Kidney (tissue), 22 donors: ENCODE measurements at regions of chr11 and their contacts with region 1.

Region 1: DNA sequence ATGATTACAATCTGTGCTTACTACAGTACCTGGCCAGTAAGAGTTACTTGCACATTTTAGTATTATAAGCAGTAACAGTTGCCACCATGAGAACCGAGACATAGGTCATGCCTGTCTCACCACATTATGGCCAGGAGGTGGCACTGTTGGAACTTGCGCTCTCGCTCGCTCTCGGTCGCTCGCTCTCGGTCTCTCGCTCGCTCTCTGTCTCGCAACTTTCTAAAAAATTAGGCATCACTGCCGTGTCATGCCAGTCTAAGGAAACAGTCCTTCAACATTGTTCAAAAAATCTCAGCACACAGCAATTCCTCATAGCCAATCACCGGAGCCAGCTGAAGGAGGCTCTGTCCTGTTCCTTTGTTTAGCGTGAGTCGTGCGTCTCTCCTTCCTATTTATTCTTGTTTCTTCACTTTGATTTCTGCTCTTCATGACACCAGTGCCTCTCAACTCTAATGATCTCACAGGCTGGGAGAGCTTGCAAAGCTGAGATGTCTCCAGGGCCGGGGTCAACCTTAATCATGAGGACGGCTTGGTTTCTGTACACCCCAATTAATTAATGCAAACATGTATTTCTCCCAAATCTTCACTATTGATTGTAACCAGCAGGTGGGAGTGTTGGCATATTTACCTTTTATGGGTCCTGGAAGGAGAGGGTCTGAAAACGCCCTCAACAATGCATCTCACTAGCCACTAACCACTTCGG is 6.3 kb upstream of the ADAMTS8 start:
- DNase-seq: peak in 4 of 5 donors; percentile 84 to 96 (median 90)
- H3K4me3 ChIP-seq: peak overlapping the region; percentile 88 to 94 (median 93)
- H3K27ac ChIP-seq: peak overlapping the region in 1 of 2 donors; percentile 71
- H3K4me1 ChIP-seq: peaks cover 0 to 8% (median 0%) of the 10 kb centered on the region in 3 donors
- H3K27me3 ChIP-seq: peaks cover 3% of the 10 kb centered on the region
- CTCF ChIP-seq: peak; percentile 91

Region 2: DNA sequence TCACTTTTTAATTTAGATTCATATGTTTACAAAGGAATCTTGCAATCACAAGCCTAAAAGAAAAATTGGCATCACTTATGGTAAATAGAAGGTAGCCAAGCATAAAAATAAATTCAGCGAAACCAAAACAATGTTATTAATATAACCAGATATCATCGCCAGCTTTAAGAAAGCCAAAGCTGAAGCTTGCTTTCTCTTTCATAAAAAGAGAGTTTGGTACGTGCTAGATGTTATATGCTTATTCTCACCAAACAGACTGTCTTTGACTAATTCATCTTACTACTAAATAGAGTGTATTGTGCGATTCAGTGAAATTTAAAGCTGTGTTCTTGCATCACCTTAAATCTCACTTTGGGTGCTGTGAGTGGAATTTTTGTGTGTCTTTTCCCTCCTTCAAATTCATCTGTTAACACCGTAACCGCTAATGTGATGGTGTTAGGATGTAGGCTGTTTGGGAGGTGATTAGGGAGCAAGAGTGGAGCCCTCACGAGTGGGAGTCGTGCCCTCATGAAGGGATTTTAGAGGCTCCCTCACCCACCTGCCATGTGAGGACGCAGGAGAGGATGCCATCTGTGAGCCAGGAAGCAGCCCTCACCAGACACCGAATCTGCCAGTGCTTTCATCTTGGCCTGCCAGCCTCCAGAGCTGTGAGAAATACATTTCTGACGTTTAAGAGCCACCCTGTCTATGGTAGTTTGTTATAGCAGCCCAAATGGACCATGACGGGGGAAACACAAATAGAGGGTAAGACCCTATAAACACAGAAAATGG is 753.1 kb before region 1 on chr11:
- intact Hi-C with region 1: no loop called
- DNase-seq: no peak
- H3K4me3 ChIP-seq: no peak overlapping the region
- H3K27ac ChIP-seq: no peak overlapping the region
- H3K4me1 ChIP-seq: no peaks in the 10 kb centered on the region
- H3K27me3 ChIP-seq: no peaks in the 10 kb centered on the region
- CTCF ChIP-seq: no peak

Region 3: GRCh38 chr11:130689222-130689908 is 254.7 kb after region 1 on chr11:
- intact Hi-C with region 1: no loop called
- DNase-seq: peak in 1 of 5 donors; percentile 70
- H3K4me3 ChIP-seq: no peak overlapping the region
- H3K27ac ChIP-seq: no peak overlapping the region
- H3K4me1 ChIP-seq: no peaks in the 10 kb centered on the region
- H3K27me3 ChIP-seq: no peaks in the 10 kb centered on the region
- CTCF ChIP-seq: no peak

Region 4: DNA sequence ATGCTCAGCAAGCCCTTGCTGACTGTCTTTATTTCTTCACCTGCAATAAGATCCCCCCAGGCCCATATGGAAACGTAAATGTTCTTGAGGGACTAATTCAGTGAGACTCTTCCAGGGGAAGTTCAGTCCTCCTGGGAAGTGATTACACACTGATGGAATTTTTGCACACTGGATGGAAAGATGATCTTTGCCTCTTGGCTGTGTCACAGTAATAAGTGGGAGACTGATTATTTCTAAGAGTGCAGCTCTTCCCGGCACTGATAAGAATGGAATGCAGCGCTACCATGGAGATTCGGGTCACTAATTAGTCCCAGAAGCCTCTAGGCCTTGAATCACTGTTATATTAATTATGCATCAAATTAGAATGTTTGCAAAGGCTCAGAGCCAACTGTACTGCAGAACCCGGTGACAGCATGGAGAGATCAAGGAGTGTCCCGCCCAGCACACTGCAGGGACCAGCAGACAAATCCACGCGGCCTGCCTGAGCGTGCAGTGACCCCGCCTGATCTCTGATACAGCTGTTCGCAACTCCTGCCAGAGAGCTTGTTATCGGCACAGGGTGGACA is 303.3 kb after region 1 on chr11:
- intact Hi-C with region 1: no loop called
- DNase-seq: peak in 4 of 5 donors; percentile 76 to 93 (median 88)
- H3K4me3 ChIP-seq: no peak overlapping the region
- H3K27ac ChIP-seq: peak overlapping the region in 1 of 2 donors; percentile 2
- H3K4me1 ChIP-seq: peaks cover 0 to 7% (median 4%) of the 10 kb centered on the region in 3 donors
- H3K27me3 ChIP-seq: no peaks in the 10 kb centered on the region
- CTCF ChIP-seq: no peak

Region 5: GRCh38 chr11:130831506-130831905 is 396.8 kb after region 1 on chr11:
- intact Hi-C with region 1: loop called (anchors 10 kb)
- DNase-seq: peak in 4 of 5 donors; percentile 67 to 83 (median 77)
- H3K4me3 ChIP-seq: no peak overlapping the region
- H3K27ac ChIP-seq: no peak overlapping the region
- H3K4me1 ChIP-seq: peaks cover 5 to 6% (median 6%) of the 10 kb centered on the region in 3 donors
- H3K27me3 ChIP-seq: no peaks in the 10 kb centered on the region
- CTCF ChIP-seq: no peak

Region 6: DNA sequence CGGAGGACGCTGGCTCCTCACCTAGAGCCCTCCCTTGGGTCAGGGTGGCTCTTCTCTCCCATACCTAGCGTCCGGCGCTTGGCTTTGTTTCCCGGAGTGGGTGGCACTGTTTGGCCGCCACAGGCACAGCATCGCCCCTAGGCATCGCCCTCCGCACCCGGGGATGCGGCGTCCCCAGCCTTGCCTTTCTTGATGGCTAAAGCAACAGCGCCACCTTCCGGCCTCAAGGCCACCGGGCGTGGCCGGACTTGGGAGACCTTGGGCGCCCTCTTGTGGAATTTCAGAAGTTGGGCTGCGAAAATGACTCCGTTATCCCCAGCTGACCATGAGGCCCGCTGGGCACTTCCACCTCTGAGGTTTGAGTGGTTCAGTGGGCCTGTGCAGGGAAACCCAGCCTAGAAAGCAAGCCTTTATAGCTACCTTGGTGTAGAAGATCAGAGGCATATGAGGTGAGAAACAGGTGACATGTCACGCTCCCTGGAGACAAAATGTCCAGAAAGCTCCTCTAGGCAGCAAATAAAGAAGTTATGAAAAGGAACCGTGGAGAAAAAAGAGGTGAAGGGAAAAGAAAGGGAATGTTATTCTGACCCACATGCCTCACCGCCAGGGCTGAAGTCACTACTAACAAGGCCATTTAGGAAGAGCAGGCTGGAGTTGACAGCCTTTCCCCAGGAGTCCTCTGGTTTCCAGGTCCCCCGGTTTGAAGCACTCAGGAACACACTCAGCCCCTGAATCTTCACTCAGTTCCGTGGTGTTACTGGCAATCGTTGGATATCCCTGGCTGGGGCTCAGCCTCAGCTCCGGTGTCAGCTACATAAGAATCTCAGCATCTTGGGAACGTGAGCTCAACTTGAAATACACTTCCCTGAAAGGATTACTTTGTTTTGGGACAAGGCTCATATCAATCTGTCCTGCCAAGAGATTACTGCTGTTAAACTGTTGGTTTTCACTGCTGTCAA is 427.5 kb after region 1 on chr11:
- intact Hi-C with region 1: loop called (anchors 5 kb)
- DNase-seq: peak; percentile 94 to 97 (median 96)
- H3K4me3 ChIP-seq: no peak overlapping the region
- H3K27ac ChIP-seq: no peak overlapping the region
- H3K4me1 ChIP-seq: no peaks in the 10 kb centered on the region
- H3K27me3 ChIP-seq: no peaks in the 10 kb centered on the region
- CTCF ChIP-seq: peak; percentile 100